PC-3 (cell line): ENCODE measurements at regions of chr2 and their contacts with region 1.

Region 1: DNA sequence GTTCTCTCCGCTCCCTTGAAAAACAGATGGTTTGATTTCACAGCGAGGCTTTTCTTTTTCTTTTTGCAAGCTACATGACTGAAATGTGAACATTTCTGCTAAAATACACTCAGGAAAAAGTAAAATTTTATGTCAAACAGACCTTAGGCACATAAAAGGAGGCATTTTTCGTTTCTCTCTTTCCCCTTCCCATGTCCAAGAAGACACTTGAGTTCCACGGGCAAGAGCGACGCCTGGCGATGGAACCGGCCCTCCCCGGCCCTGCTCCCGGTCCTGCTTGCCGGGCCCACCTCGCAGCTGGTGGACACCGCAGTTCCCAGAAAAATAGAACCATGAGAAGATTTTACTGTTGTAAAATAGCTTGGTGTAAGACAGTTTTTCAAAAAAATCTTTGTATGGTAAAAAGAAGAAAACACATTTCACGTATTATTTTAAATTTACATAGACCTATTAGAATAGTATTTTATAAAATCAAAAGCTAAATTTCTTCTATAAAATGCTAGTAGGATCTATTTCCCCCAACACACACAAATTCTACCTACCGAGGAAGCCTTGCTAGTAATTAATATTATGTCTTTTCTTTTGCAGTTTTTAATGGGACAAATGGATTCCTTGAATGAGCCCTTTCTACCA is 2.3 kb upstream of the ALKAL2 start:
- DNase-seq: peak; percentile 80
- ATAC-seq: peak; percentile 86
- H3K4me3 ChIP-seq: peak overlapping the region; percentile 73
- H3K27ac ChIP-seq: no peak overlapping the region
- H3K4me1 ChIP-seq: peaks cover 9% of the 10 kb centered on the region
- H3K27me3 ChIP-seq: peaks cover 18% of the 10 kb centered on the region
- CTCF ChIP-seq: peak; percentile 87

Region 2: GRCh38 chr2:175880-176800 is 114.1 kb before region 1 on chr2:
- CTCF ChIA-PET with region 1: interaction called, 3 read pairs
- POLR2A ChIA-PET with region 1: no interaction called
- intact Hi-C with region 1: loop called (anchors 1 kb)
- DNase-seq: no peak
- ATAC-seq: no peak
- H3K4me3 ChIP-seq: no peak overlapping the region
- H3K27ac ChIP-seq: no peak overlapping the region
- H3K4me1 ChIP-seq: peaks cover 30% of the 10 kb centered on the region
- H3K27me3 ChIP-seq: no peaks in the 10 kb centered on the region
- CTCF ChIP-seq: no peak

Region 3: DNA sequence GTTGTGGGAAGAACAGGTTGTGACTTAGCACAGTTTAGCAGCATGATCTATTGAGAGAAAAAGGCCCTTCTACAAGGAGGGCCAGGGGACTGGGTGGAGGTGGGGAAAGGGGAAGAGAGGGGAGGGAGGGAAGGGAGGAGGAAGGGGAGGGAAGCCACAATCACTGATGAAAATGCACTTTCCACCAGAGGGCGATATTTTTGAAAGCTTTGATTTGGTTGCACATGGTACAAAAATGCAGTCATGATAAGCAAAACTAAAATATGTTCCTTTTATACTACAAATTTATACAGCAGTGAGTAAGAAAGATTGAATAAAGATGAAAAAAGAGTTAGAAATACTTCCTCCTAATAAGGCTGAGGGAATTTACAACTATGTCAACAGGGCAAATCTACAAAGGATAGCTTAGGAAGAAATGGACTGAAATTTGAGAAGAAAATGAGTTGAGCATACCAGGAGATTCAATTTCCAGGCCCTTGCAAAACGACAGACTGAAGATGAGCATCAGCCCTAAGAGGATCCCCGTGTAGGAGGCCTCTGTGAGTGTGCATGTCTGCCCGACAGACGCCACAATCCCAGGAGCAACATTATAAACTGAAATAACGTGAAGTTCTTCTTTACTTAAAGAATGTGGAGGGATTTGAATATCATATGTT is 43.6 kb before region 1 on chr2:
- CTCF ChIA-PET with region 1: no interaction called
- POLR2A ChIA-PET with region 1: no interaction called
- intact Hi-C with region 1: loop called (anchors 1 kb)
- DNase-seq: peak; percentile 79
- ATAC-seq: peak; percentile 77
- H3K4me3 ChIP-seq: no peak overlapping the region
- H3K27ac ChIP-seq: no peak overlapping the region
- H3K4me1 ChIP-seq: no peaks in the 10 kb centered on the region
- H3K27me3 ChIP-seq: no peaks in the 10 kb centered on the region
- CTCF ChIP-seq: peak; percentile 72

Region 4: GRCh38 chr2:479490-480176 is 189.4 kb after region 1 on chr2:
- CTCF ChIA-PET with region 1: no interaction called
- POLR2A ChIA-PET with region 1: no interaction called
- intact Hi-C with region 1: no loop called
- DNase-seq: peak; percentile 11
- ATAC-seq: 0 out of 2 replicates have a peak, but pooled peaks have one; percentile 31
- H3K4me3 ChIP-seq: peak overlapping the region; percentile 64
- H3K27ac ChIP-seq: no peak overlapping the region
- H3K4me1 ChIP-seq: 0 out of 2 replicates have a peak, but pooled peaks cover 4% of the 10 kb centered on the region
- H3K27me3 ChIP-seq: peaks cover 85% of the 10 kb centered on the region
- CTCF ChIP-seq: no peak

Region 5: DNA sequence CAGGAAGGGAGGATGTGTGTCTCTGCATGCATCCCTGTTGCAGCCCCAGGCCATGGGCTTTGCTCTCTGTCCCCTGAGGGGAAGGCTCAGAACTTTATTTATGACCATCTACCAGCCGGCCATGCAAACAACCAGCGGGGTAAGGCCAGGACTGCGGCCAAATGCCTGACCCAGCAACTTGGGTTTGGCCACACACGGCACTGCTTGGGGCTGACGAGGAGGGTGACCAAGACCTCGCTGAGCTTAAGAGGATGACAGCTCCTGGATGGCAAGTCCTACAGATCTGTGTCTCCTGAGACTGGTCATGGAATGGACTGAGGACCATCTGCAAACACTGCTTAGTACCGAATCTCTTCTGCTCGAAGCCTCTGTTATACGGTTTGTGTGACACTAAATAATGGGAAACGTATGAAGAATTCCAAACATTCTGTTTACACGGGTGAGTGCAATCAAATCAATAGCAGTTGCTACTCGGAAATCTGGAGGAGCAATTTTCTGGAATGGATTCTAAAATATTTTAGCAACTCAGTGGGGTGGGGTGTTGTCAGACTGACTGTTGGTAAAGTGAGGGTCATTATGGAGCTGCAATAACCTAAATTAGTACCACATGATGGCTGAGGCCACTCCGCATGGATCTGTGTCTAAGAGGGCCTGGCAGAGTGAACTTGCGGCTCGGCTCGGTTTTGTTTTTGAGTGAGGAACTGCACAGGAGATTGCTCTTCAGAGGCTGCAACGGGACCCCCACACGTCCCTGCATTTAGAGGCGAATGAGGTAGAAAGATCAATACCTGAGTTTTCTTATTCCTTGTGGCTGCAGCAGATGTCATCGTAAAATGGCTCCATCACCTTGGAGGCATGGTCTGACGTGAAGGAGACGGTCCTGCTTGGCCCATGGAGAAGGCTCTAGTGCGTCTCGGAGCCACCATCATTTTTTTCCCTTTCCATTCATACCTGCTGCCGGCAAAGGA is 360.4 kb after region 1 on chr2:
- CTCF ChIA-PET with region 1: no interaction called
- POLR2A ChIA-PET with region 1: no interaction called
- intact Hi-C with region 1: no loop called
- DNase-seq: no peak
- ATAC-seq: no peak
- H3K4me3 ChIP-seq: no peak overlapping the region
- H3K27ac ChIP-seq: no peak overlapping the region
- H3K4me1 ChIP-seq: no peaks in the 10 kb centered on the region
- H3K27me3 ChIP-seq: peaks cover 7% of the 10 kb centered on the region
- CTCF ChIP-seq: no peak